SK-N-SH (cell line): ENCODE measurements at regions of chr4 and their contacts with region 1.

Region 1: DNA sequence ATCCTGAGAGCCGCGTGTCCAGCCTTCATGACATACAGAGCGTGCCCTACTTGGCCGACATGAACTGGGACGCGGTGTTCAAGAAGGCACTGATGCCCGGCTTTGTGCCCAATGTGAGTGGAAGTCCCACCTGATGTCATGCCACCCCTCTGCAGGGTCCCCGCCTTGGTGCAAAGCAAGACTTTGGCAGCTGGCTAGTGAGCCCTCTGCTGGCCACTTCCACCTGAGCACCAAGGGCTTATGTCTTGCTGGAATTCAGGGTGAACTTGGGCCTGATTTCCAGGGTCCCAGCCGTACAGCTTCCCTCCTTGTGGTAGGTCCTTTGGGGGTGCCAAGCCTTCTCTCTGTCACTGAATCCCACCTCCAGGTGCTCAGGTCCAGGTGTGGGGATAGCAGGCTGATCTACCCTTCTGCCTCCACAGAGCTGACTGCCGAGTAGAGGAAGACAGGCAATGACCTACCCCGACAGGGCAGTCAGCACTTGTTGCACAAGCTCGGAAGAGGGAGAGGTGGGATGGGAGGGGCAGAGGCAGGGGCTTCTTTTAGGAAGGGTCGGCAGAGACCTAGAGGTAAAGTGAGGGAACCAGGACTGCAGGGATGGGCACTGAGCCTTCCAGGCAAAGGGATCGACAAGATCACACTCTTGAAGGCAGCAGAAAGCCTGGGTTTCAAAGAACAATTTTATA is 248.1 kb downstream of the EVC2 start:
- DNase-seq: peak; percentile 60
- H3K4me3 ChIP-seq: no peak overlapping the region; a peak in 1 of 4 replicates
- H3K27ac ChIP-seq: no peak overlapping the region
- H3K4me1 ChIP-seq: peaks cover 0 to 3% of the 10 kb centered on the region in 2 experiments; a peak in 1 of 4 replicates
- H3K27me3 ChIP-seq: no peaks in the 10 kb centered on the region; the same call in 1 of the 2 replicates
- CTCF ChIP-seq: peak; percentile 56
- EP300 ChIP-seq: no peak
- RAD21 ChIP-seq: peak; percentile 45

Region 2: DNA sequence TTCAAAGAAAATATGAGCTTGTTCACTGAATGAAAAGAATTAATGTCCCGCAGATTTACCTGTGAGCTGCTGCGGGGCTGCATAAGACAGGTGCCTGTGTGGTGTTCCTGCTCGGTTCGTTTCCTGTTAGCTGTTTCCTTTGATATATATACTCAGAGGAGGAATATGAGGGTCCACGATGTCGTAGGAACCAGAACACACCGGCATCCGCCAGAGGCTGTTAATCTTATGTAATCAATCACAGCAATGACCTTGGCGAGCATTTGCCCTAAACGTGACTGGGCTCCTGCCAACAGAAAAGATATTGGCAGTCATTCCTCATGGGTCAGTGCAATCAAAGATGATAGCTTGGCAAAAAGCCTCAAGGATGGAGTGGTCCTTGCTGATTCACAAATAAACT is 12.0 kb before region 1 on chr4:
- CTCF ChIA-PET with region 1: interaction called, 11 read pairs
- POLR2A ChIA-PET with region 1: interaction called, 3 read pairs
- DNase-seq: no peak
- H3K4me3 ChIP-seq: no peak overlapping the region
- H3K27ac ChIP-seq: no peak overlapping the region
- H3K4me1 ChIP-seq: no peaks in the 10 kb centered on the region; a peak in 1 of 4 replicates
- H3K27me3 ChIP-seq: no peaks in the 10 kb centered on the region
- CTCF ChIP-seq: no peak
- EP300 ChIP-seq: no peak
- RAD21 ChIP-seq: no peak

Region 3: DNA sequence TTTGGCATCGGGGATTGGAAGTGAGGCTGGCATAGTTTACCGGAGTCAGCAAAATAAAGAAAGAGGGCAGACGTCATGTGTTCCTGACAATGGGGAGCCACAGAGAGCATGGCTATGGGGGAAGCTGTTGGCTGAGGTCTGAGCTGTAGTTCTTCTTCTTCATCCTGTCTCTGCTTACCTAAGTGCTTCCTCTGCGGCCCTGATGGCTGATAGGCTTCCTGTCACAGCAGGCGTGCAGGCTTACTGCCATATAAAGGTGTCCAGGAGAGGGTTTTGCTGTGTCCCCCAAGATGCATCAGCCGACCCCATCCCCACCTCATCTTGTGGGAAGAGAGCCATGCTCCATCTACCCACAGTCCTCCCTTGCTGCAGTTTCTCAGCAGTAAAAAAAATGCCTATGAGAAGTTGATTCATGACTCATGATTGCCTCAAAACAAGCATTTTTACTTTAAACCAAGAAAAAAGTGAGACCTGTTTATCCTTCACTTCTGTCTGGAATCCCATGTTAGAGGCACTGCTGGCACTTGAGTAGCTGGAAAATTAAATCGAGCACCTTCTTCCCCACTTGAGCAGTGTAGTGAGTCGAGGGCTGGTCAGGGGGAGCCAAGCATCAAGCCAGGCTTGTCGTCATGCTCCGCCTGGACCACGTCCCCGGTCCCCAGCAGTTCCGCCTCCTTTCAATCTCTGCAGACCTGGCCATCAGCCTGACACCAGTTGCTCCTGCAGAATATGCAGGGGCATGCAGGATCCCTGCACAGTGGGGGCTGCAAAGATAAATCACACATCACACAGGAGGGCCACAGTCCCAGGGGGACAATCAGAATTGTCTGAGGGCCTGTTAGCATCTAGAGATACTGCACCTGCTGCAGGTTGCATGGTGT is 10.3 kb after region 1 on chr4:
- CTCF ChIA-PET with region 1: interaction called, 14 read pairs
- POLR2A ChIA-PET with region 1: no interaction called
- DNase-seq: no peak
- H3K4me3 ChIP-seq: no peak overlapping the region
- H3K27ac ChIP-seq: no peak overlapping the region
- H3K4me1 ChIP-seq: peaks cover 0 to 4% of the 10 kb centered on the region in 2 experiments; a peak in 1 of 4 replicates
- H3K27me3 ChIP-seq: no peaks in the 10 kb centered on the region
- CTCF ChIP-seq: no peak
- EP300 ChIP-seq: no peak
- RAD21 ChIP-seq: no peak

Region 4: DNA sequence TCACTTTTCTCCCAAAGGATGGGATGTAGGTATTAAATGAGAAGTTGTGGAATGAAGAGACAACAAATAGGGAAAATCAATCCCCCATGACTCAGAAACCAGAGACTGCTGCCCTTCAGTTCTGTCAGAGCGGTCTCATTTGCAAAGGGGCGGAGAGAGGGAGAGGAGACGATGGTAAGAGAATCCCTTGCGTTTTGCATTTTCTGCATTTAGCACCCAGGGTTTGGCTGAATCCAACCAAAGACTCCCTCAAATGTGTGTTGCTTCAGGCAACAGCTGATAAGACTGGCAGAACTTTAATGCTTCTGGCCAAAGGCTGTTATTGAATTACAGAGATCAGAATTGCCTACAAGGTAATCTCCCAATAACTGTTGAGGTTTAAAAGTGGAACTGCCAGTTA is 17.9 kb after region 1 on chr4:
- CTCF ChIA-PET with region 1: interaction called, 10 read pairs
- POLR2A ChIA-PET with region 1: no interaction called
- DNase-seq: no peak
- H3K4me3 ChIP-seq: no peak overlapping the region
- H3K27ac ChIP-seq: no peak overlapping the region
- H3K4me1 ChIP-seq: peaks cover 0 to 3% of the 10 kb centered on the region in 2 experiments; a peak in 1 of 4 replicates
- H3K27me3 ChIP-seq: no peaks in the 10 kb centered on the region
- CTCF ChIP-seq: no peak
- EP300 ChIP-seq: no peak
- RAD21 ChIP-seq: no peak